H1 (cell line): ENCODE measurements at regions of chr3 and their contacts with region 1.

Region 1: GRCh38 chr3:58008140-58009025 is at the start of gene FLNB:
- DNase-seq: peak in 1 of 2 experiments; percentile 90
- H3K4me3 ChIP-seq: peak within 1 kb of the TSS; percentile 65 to 97 (median 90)
- H3K27ac ChIP-seq: peak within 1 kb of the TSS; percentile 62; the same call in 1 of the 2 replicates
- H3K4me1 ChIP-seq: peaks cover 4 to 19% (median 5%) of the 10 kb centered on the region in 4 experiments; a peak in 6 of 7 replicates
- H3K27me3 ChIP-seq: no peaks in the 10 kb centered on the region
- CTCF ChIP-seq: peak; percentile 68 to 95 (median 82)
- EP300 ChIP-seq: no peak
- POLR2A ChIP-seq: peak in 1 of 2 experiments; percentile 90; a peak in 2 of 3 replicates
- RAD21 ChIP-seq: peak; percentile 76 to 84
- total RNA-seq, gene FLNB: 118 and 122 TPM in 2 replicates

Region 2: GRCh38 chr3:57983734-57984518 is 24.5 kb before region 1 on chr3:
- CTCF ChIA-PET with region 1: interaction called, 11 read pairs
- POLR2A ChIA-PET with region 1: interaction called, 5 read pairs
- DNase-seq: no peak
- H3K4me3 ChIP-seq: no peak overlapping the region
- H3K27ac ChIP-seq: no peak overlapping the region
- H3K4me1 ChIP-seq: no peaks in the 10 kb centered on the region
- H3K27me3 ChIP-seq: no peaks in the 10 kb centered on the region; a peak in 1 of 7 replicates
- CTCF ChIP-seq: no peak
- EP300 ChIP-seq: no peak
- POLR2A ChIP-seq: no peak
- RAD21 ChIP-seq: no peak

Region 3: GRCh38 chr3:58021072-58021959 is 12.9 kb after region 1 on chr3:
- CTCF ChIA-PET with region 1: interaction called, 33 read pairs
- POLR2A ChIA-PET with region 1: interaction called, 55 read pairs
- DNase-seq: peak in 1 of 2 experiments; percentile 72
- H3K4me3 ChIP-seq: peak overlapping the region in 3 of 4 experiments; percentile 5 to 11 (median 7); a peak in 3 of 8 replicates
- H3K27ac ChIP-seq: peak overlapping the region; percentile 88
- H3K4me1 ChIP-seq: peaks cover 16 to 44% (median 33%) of the 10 kb centered on the region in 4 experiments
- H3K27me3 ChIP-seq: no peaks in the 10 kb centered on the region
- CTCF ChIP-seq: peak in 2 of 3 experiments; percentile 27 to 36; a peak in 2 of 4 replicates
- EP300 ChIP-seq: peak in 1 of 2 experiments; percentile 71; a peak in 1 of 3 replicates
- POLR2A ChIP-seq: peak in 1 of 2 experiments; percentile 69; a peak in 1 of 3 replicates
- RAD21 ChIP-seq: peak; percentile 34 to 57; a peak in 2 of 4 replicates

Region 4: DNA sequence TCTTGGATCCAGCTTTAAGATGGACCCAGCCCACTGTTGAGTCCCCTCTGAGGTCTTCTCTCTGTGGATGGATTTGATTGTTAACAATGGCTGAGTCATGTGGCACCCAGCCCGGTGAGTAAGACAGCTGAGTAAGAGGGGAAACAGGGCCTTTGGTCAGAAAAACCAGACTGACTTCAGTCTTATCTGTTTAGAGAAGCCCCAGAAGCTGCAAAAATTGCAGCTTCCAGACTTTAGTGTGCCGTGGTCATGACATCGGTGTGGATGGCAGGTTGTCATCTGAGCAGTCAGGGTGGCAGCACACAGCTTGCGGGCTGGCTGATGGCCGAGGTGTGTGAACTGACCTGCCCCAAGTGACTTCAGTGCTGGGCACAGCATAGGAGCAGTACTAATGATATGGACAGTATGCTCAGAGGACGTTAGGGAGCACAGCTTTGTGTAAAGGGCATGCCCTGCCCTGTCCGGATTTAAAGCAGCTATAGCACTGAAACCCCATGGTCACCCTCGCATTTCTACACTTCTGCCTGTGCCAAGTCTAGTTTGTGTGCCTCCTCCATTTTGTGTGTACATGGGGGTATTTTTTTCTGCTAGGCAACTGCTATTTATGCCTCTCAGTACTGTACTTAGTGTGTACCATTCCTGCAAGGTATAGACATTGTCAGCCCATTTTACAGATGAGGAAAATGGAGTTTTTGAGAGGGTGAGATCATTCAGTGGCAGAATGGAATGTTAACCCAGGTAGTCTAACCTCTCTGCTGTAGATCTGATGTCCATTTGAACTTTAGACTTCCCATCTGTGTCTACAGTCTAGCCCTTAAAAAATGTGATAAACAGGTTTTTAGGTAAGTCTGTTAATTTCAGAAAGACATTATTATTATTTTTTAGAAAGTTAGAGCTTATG is 44.2 kb after region 1 on chr3:
- CTCF ChIA-PET with region 1: interaction called, 19 read pairs
- POLR2A ChIA-PET with region 1: interaction called, 7 read pairs
- DNase-seq: no peak
- H3K4me3 ChIP-seq: no peak overlapping the region
- H3K27ac ChIP-seq: no peak overlapping the region
- H3K4me1 ChIP-seq: peaks cover 11 to 25% (median 19%) of the 10 kb centered on the region in 4 experiments
- H3K27me3 ChIP-seq: no peaks in the 10 kb centered on the region
- CTCF ChIP-seq: no peak
- EP300 ChIP-seq: no peak
- POLR2A ChIP-seq: no peak
- RAD21 ChIP-seq: no peak

Region 5: DNA sequence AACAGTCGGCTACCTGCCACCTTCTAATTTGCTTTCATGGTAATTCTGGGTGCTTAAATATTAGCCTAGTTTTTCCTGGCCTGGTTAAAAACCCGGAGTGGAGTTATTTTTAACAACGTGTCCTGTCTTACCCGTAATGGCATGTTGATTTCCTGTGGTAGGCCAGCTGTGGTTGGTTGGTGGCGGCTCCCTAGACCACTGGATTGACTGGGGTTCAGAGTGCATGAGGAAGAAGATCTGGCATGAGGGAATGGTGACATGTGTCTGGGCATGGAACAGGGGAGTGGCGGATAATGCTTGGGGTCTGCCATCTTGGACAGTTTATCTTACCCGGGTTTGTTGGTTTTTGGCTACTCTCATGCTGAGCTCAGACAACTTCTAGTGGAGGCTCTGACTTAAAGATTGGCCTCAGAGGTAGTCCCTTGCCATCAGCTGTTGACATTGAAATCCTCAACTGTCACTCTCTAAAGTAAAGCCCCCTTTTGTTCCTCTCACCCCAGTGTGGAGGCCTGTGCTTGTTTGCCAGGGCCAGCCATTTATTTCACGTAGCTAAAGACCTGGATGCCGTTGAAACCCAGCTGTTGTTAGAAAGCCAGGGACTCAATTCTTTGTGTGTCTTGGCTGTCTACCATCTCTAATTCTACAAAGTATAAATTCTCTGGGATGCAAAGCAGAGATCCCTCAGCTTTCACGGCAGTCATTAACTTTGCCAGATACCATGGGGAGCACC is 120.8 kb after region 1 on chr3:
- CTCF ChIA-PET with region 1: interaction called, 10 read pairs
- POLR2A ChIA-PET with region 1: no interaction called
- DNase-seq: no peak
- H3K4me3 ChIP-seq: no peak overlapping the region
- H3K27ac ChIP-seq: no peak overlapping the region
- H3K4me1 ChIP-seq: no peaks in the 10 kb centered on the region
- H3K27me3 ChIP-seq: no peaks in the 10 kb centered on the region
- CTCF ChIP-seq: no peak
- EP300 ChIP-seq: no peak
- POLR2A ChIP-seq: no peak
- RAD21 ChIP-seq: no peak

Region 6: GRCh38 chr3:58135712-58136543 is 127.5 kb after region 1 on chr3:
- CTCF ChIA-PET with region 1: interaction called, 11 read pairs
- POLR2A ChIA-PET with region 1: no interaction called
- DNase-seq: no peak
- H3K4me3 ChIP-seq: no peak overlapping the region
- H3K27ac ChIP-seq: no peak overlapping the region
- H3K4me1 ChIP-seq: no peaks in the 10 kb centered on the region
- H3K27me3 ChIP-seq: no peaks in the 10 kb centered on the region
- CTCF ChIP-seq: no peak
- EP300 ChIP-seq: no peak
- POLR2A ChIP-seq: no peak
- RAD21 ChIP-seq: no peak

Region 7: DNA sequence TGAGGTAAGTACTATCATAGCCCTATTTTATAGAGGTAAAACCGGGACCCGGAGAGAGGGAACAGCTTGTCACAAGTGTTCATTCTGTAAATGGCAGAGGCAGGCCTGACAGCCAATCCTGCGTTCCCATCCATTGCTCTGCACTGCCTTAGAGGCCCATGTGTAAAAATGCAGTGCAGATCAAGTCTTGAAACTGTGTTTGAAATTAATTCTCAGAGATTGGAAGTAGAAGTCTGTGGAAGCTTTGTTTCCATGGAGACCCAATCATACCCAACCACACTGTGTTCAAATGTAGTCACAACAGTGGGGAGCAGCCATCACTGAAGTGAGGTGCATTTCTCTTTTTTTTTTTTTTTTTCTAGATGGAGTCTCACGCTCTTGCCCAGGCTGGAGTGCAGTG is 215.5 kb after region 1 on chr3:
- CTCF ChIA-PET with region 1: no interaction called
- POLR2A ChIA-PET with region 1: no interaction called
- DNase-seq: no peak
- H3K4me3 ChIP-seq: no peak overlapping the region
- H3K27ac ChIP-seq: no peak overlapping the region
- H3K4me1 ChIP-seq: no peaks in the 10 kb centered on the region
- H3K27me3 ChIP-seq: no peaks in the 10 kb centered on the region
- CTCF ChIP-seq: no peak
- EP300 ChIP-seq: no peak
- POLR2A ChIP-seq: no peak
- RAD21 ChIP-seq: no peak

Region 8: DNA sequence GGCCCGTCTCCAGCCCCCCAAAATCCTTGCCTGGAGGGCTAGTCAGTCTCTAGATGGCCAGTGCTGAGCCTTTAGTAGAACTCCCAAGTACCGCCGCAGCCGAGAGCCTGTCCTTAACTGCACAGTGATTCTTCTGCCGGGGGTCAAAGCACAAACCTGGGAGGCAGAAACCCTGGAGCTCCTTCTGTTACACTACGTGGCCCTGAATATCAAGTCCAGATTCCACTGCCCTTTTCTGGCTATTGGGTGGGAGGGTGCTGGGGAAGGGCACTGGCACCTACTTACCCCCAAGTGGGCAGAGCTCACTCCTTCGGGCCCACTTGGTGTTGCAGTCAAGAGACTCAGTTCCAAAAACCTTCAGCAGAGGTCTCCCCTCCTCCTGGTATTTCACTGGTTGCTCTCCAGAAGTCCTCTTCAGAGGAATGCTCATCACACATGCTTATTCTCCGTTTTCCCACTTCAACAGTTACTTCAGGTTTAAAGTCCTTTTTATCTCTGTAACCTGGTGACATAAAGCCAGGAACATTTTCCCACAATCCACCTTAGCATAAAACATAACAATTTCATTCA is 414.5 kb after region 1 on chr3:
- CTCF ChIA-PET with region 1: no interaction called
- POLR2A ChIA-PET with region 1: no interaction called
- DNase-seq: no peak
- H3K4me3 ChIP-seq: no peak overlapping the region
- H3K27ac ChIP-seq: no peak overlapping the region; the same call in 1 of the 2 replicates
- H3K4me1 ChIP-seq: no peaks in the 10 kb centered on the region; a peak in 1 of 7 replicates
- H3K27me3 ChIP-seq: no peaks in the 10 kb centered on the region
- CTCF ChIP-seq: peak; percentile 29 to 56 (median 54)
- EP300 ChIP-seq: no peak
- POLR2A ChIP-seq: no peak; a peak in 1 of 3 replicates
- RAD21 ChIP-seq: peak; percentile 68 to 73